ENCODE measurements at regions of chr10 and their contacts with region 1.

Region 1: GRCh38 chr10:95693668-95694534 is at the start of gene TCTN3:
- DNase-seq: peak; percentile 98
- ATAC-seq: peak; percentile 99
- H3K4me3 Mint-ChIP-seq: peak within 1 kb of the TSS; percentile 95
- H3K27ac Mint-ChIP-seq: peak within 1 kb of the TSS; percentile 91
- H3K4me1 Mint-ChIP-seq: peaks cover 34% of the 10 kb centered on the region
- H3K27me3 Mint-ChIP-seq: no peaks in the 10 kb centered on the region
- total RNA-seq, gene TCTN3: 19.5 to 20.4 TPM

Region 2: DNA sequence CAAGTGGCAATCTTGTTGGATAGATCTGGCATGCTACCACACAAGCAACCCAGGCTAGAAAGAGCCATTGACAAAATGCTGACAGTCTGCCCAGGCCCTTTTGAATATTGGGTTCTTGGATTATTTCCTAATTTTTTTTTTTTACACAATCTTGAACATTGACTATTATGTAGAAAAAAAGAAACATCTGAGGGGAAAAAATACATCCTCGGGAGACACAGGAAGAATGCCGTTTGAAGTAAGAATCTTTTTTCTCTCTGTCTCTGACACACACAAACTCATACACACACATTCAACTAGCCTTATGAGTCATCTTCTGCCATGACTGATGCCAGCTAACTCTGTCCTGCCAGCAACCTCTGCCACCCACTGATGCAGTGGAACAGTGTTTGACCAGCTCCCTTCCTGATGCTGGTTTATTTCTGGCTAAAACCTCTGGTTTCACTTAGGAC is 179.9 kb before region 1 on chr10:
- CTCF ChIA-PET with region 1: no interaction called
- POLR2A ChIA-PET with region 1: no interaction called
- DNase-seq: no peak
- ATAC-seq: no peak
- H3K4me3 Mint-ChIP-seq: no peak overlapping the region
- H3K27ac Mint-ChIP-seq: no peak overlapping the region
- H3K4me1 Mint-ChIP-seq: no peaks in the 10 kb centered on the region
- H3K27me3 Mint-ChIP-seq: peaks cover 3% of the 10 kb centered on the region

Region 3: DNA sequence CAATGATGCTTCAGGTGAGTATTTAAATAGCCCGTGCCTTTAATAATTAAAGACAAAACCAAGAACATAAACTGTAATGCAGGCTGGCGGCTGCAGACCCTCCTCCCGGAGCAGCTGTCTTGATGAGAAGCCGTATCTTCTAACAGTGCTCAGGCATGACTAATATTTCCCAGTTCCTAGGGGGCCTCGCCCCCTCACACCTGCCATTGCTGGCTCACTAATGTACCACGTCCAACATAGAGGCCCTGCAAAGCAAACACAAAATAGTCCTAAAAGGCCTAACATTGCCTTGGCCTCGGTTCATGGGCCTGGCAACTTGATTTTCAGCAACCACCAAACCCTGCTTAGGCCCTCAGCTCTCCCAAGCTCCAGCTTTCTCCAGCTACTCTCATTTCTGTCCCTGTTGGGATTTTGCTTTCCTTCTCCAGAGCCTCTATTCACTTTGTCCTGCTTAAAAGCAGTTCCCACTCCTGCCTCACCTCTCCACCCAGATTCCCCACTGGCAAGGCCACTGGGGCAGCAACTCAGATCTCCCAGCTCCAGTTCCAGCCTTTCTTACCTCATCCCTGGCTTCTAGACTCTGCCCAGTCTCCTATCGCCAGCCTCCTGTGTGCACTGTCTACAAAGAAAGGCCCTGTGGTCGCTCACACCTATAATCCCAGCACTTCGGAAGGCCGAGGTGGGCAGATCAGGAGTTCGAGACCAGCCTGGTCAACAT is 149.0 kb before region 1 on chr10:
- CTCF ChIA-PET with region 1: no interaction called
- POLR2A ChIA-PET with region 1: no interaction called
- DNase-seq: no peak
- ATAC-seq: no peak
- H3K4me3 Mint-ChIP-seq: no peak overlapping the region
- H3K27ac Mint-ChIP-seq: no peak overlapping the region
- H3K4me1 Mint-ChIP-seq: no peaks in the 10 kb centered on the region
- H3K27me3 Mint-ChIP-seq: no peaks in the 10 kb centered on the region

Region 4: GRCh38 chr10:95567903-95568644 is 125.8 kb before region 1 on chr10:
- CTCF ChIA-PET with region 1: no interaction called
- POLR2A ChIA-PET with region 1: no interaction called
- DNase-seq: no peak
- ATAC-seq: no peak
- H3K4me3 Mint-ChIP-seq: no peak overlapping the region
- H3K27ac Mint-ChIP-seq: no peak overlapping the region
- H3K4me1 Mint-ChIP-seq: no peaks in the 10 kb centered on the region
- H3K27me3 Mint-ChIP-seq: peaks cover 23% of the 10 kb centered on the region

Region 5: GRCh38 chr10:95661818-95662217 is 32.1 kb before region 1 on chr10:
- CTCF ChIA-PET with region 1: interaction called, 16 read pairs
- POLR2A ChIA-PET with region 1: no interaction called
- DNase-seq: no peak
- ATAC-seq: no peak
- H3K4me3 Mint-ChIP-seq: no peak overlapping the region
- H3K27ac Mint-ChIP-seq: no peak overlapping the region
- H3K4me1 Mint-ChIP-seq: peaks cover 3% of the 10 kb centered on the region
- H3K27me3 Mint-ChIP-seq: no peaks in the 10 kb centered on the region

Region 6: DNA sequence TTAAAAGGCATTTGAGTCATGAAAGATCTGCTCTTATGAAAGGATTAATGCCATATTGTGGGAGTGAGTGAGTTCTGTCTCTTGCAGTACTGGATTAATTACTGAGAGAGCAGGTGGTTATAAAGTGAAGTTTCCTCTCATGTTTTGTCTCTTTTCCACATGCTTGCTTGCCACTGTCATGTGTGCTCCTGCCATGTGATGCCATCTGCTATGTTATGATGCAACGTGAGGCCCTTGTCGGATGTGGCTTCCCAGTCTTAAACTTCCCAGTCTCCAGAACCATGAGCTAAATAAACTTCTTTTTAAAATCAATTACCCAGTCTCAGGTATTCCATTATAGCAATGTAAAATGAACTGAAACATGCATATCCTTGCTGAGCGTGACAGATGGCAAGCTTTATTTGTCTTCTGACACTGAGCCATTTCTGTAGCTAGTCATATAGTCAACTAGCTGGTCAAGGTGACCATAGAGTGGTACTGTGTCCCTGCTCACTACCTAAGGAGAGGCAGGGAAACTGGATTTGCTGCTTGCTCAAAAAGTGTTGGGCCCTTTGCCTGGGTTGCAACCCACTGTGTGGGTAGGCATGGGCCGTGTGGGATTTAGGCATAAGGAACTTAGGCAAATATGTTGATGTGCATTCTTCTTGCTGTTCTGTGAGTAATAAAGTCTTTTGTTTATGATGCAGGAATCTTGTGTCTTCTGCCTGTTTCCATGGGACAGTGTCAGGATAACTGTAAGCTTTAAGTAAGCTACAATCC is 22.7 kb after region 1 on chr10:
- CTCF ChIA-PET with region 1: interaction called, 16 read pairs
- POLR2A ChIA-PET with region 1: no interaction called
- DNase-seq: no peak
- ATAC-seq: no peak
- H3K4me3 Mint-ChIP-seq: no peak overlapping the region
- H3K27ac Mint-ChIP-seq: no peak overlapping the region
- H3K4me1 Mint-ChIP-seq: peaks cover 5% of the 10 kb centered on the region
- H3K27me3 Mint-ChIP-seq: peaks cover 2% of the 10 kb centered on the region

Region 7: DNA sequence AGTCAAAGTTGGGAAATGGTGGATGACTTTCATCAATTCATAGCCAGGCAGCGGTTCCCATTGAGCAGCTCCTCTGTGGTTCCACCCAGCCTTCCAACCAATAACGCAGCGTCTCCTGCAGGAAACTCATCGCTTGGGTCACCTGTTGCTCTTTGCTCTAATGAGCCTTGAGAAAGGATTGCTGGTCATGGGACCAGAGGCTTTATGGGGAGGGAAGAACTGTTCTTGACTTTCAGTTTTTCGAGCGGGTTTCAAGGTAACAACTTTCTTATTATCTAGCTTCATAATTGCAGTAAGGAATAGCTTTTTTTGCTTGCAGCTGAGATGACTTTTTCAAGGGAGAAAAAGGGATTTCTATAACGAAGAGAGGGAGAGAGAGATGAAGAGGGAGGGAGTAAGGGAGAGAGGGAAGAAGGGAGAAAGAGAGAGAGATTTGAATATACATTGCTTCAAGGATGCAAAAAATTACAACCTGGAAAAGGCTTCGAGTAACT is 61.7 kb after region 1 on chr10:
- CTCF ChIA-PET with region 1: interaction called, 98 read pairs
- POLR2A ChIA-PET with region 1: interaction called, 5 read pairs
- DNase-seq: no peak
- ATAC-seq: no peak
- H3K4me3 Mint-ChIP-seq: peak overlapping the region; percentile 77
- H3K27ac Mint-ChIP-seq: peak overlapping the region; percentile 80
- H3K4me1 Mint-ChIP-seq: peaks cover 48% of the 10 kb centered on the region
- H3K27me3 Mint-ChIP-seq: peaks cover 14% of the 10 kb centered on the region

Region 8: DNA sequence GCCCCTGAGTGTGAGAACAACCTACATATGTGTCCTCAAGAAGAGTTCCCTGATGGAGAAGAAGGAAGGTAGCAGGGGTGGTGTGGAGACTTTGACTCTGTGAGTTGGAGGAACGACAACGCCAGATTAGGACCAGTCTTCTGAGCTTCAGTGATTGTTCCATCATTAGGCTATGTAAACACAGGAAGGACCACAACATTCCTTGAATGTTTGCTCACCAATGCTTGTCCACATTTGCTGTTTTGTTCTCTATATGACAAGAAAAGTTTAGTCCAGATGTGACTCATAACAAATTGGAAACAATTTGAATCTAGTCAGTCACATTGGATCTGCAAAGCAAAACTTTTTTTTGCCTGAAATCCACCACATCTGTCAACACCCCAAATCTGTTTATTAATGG is 124.8 kb after region 1 on chr10:
- CTCF ChIA-PET with region 1: interaction called, 29 read pairs
- POLR2A ChIA-PET with region 1: interaction called, 4 read pairs
- DNase-seq: no peak
- ATAC-seq: no peak
- H3K4me3 Mint-ChIP-seq: no peak overlapping the region
- H3K27ac Mint-ChIP-seq: no peak overlapping the region
- H3K4me1 Mint-ChIP-seq: peaks cover 37% of the 10 kb centered on the region
- H3K27me3 Mint-ChIP-seq: peaks cover 21% of the 10 kb centered on the region

Region 9: GRCh38 chr10:95873651-95874050 is 179.8 kb after region 1 on chr10:
- CTCF ChIA-PET with region 1: interaction called, 60 read pairs
- POLR2A ChIA-PET with region 1: no interaction called
- DNase-seq: no peak
- ATAC-seq: no peak
- H3K4me3 Mint-ChIP-seq: no peak overlapping the region
- H3K27ac Mint-ChIP-seq: no peak overlapping the region
- H3K4me1 Mint-ChIP-seq: peaks cover under 1% of the 10 kb centered on the region
- H3K27me3 Mint-ChIP-seq: no peaks in the 10 kb centered on the region

Region 10: GRCh38 chr10:95907456-95908253 is 213.8 kb after region 1 on chr10 and contains the start of gene CC2D2B:
- CTCF ChIA-PET with region 1: interaction called, 19 read pairs
- POLR2A ChIA-PET with region 1: interaction called, 3 read pairs
- DNase-seq: peak; percentile 73
- ATAC-seq: peak; percentile 90
- H3K4me3 Mint-ChIP-seq: peak within 1 kb of the TSS; percentile 85
- H3K27ac Mint-ChIP-seq: peak within 1 kb of the TSS; percentile 87
- H3K4me1 Mint-ChIP-seq: peaks cover 13% of the 10 kb centered on the region
- H3K27me3 Mint-ChIP-seq: peaks cover 13% of the 10 kb centered on the region
- total RNA-seq, gene CC2D2B: 0.21 to 0.34 TPM